Heart left ventricle (tissue), 16 donors: ENCODE measurements at regions of chr3 and their contacts with region 1.

Region 1: GRCh38 chr3:26118165-26118564 is 328.3 kb downstream of the OXSM start:
- DNase-seq: peak in 1 of 5 donors; percentile 17
- ATAC-seq: peak in 3 of 4 donors; percentile 26 to 45 (median 28)
- H3K4me3 ChIP-seq: no peak overlapping the region
- H3K27ac ChIP-seq: no peak overlapping the region
- H3K4me1 ChIP-seq: no peaks in the 10 kb centered on the region
- H3K27me3 ChIP-seq: no peaks in the 10 kb centered on the region
- CTCF ChIP-seq: peak in 9 of 12 donors; percentile 15 to 44 (median 34)
- POLR2A ChIP-seq: no peak

Region 2: GRCh38 chr3:25664810-25665314 is 453.3 kb before region 1 on chr3 and contains the start of gene TOP2B:
- intact Hi-C with region 1: loop called in 2 of 10 experiments (anchors 10 kb)
- DNase-seq: peak; percentile 96 to 97 (median 97)
- ATAC-seq: peak; percentile 99 to 100 (median 100)
- H3K4me3 ChIP-seq: peak within 1 kb of the TSS; percentile 54 to 97 (median 78)
- H3K27ac ChIP-seq: peak within 1 kb of the TSS; percentile 94 to 99 (median 96)
- H3K4me1 ChIP-seq: peaks cover 9 to 43% (median 35%) of the 10 kb centered on the region in 12 donors
- H3K27me3 ChIP-seq: no peaks in the 10 kb centered on the region
- CTCF ChIP-seq: no peak
- POLR2A ChIP-seq: peak; percentile 81 to 98
- total RNA-seq, gene TOP2B: 65.1 to 124 (median 98.4) TPM

Region 3: DNA sequence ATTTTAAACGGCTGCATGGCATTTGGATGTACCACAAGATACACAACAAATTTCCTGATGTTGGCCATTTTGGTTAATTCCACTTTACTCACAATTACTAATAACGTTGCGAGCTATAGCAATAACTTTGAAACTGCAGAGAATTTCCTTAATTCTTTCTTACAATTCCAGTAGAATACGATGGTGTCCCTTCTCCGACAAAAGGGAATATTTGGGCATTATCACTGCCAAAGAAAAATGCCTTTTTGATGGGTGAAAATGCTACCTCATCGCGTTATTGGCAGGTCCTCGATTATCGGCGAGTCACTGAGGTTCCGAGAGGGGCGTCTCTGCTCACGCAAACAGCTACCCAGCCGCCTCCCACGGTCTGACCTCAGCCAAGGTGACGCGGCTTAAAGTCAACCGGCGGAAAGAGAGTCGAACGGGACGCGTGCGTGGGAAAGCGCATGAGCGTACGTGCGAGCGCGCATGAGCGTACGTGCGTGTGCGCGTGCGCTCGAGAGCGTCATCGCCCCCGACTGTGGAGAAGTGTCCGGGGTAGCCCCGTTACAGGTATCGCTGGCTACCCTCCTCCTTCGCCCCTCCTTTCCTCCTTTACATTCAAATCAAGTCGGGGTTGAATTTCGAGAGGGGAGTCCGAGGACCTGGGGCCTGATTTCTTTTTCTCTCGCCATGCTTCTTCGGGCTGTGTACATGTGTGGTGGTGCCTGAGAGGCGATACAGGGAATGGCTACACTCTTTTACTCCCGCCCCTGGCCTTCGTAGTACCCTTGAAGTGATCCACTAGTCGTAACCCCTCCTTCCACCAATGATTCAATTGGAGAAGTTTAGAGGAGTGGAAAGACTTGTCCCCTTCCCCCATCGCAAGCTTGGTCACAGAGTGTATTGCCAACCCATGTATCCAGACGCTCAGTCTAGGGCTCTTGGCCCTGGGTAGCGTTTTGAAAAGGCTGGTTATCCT is 328.3 kb before region 1 on chr3 and contains the start of gene OXSM:
- intact Hi-C with region 1: loop called in 3 of 10 experiments (anchors 10 kb)
- DNase-seq: peak; percentile 90 to 97 (median 94)
- ATAC-seq: peak; percentile 99
- H3K4me3 ChIP-seq: peak within 1 kb of the TSS; percentile 46 to 91 (median 72)
- H3K27ac ChIP-seq: peak within 1 kb of the TSS; percentile 49 to 94 (median 89)
- H3K4me1 ChIP-seq: peaks cover 0 to 32% (median 13%) of the 10 kb centered on the region in 12 donors
- H3K27me3 ChIP-seq: no peaks in the 10 kb centered on the region
- CTCF ChIP-seq: no peak
- POLR2A ChIP-seq: peak in 1 of 2 donors; percentile 95
- total RNA-seq, gene OXSM: 7.3 to 18.5 (median 13.7) TPM

Region 4: GRCh38 chr3:25904206-25904605 is 214.0 kb before region 1 on chr3:
- intact Hi-C with region 1: loop called (anchors 1 to 10 kb)
- DNase-seq: peak in 3 of 5 donors; percentile 19 to 27 (median 25)
- ATAC-seq: peak; percentile 64 to 86 (median 82)
- H3K4me3 ChIP-seq: no peak overlapping the region
- H3K27ac ChIP-seq: no peak overlapping the region
- H3K4me1 ChIP-seq: peaks cover 0 to 13% (median 0%) of the 10 kb centered on the region in 12 donors
- H3K27me3 ChIP-seq: no peaks in the 10 kb centered on the region
- CTCF ChIP-seq: peak; percentile 24 to 73 (median 58)
- POLR2A ChIP-seq: no peak

Region 5: GRCh38 chr3:26132942-26133341 is 14.8 kb after region 1 on chr3:
- intact Hi-C with region 1: no loop called
- DNase-seq: no peak
- ATAC-seq: no peak
- H3K4me3 ChIP-seq: no peak overlapping the region
- H3K27ac ChIP-seq: no peak overlapping the region
- H3K4me1 ChIP-seq: no peaks in the 10 kb centered on the region
- H3K27me3 ChIP-seq: no peaks in the 10 kb centered on the region
- CTCF ChIP-seq: no peak
- POLR2A ChIP-seq: no peak

Region 6: GRCh38 chr3:26703519-26703918 is 585.4 kb after region 1 on chr3:
- intact Hi-C with region 1: loop called in 1 of 10 experiments (anchors 10 kb)
- DNase-seq: no peak
- ATAC-seq: no peak
- H3K4me3 ChIP-seq: no peak overlapping the region
- H3K27ac ChIP-seq: no peak overlapping the region
- H3K4me1 ChIP-seq: no peaks in the 10 kb centered on the region
- H3K27me3 ChIP-seq: peaks cover 0 to 2% (median 0%) of the 10 kb centered on the region in 9 donors
- CTCF ChIP-seq: no peak
- POLR2A ChIP-seq: no peak